Mucosa of descending colon (tissue), 3 donors: ENCODE measurements at regions of chr3 and their contacts with region 1.

Region 1: GRCh38 chr3:161274719-161275298 is 53.7 kb downstream of the NMD3 start:
- DNase-seq: peak in 1 of 3 donors; percentile 30
- ATAC-seq: peak; percentile 65
- H3K4me3 ChIP-seq: no peak overlapping the region
- H3K4me1 ChIP-seq: no peaks in the 10 kb centered on the region
- CTCF ChIP-seq: no peak

Region 2: DNA sequence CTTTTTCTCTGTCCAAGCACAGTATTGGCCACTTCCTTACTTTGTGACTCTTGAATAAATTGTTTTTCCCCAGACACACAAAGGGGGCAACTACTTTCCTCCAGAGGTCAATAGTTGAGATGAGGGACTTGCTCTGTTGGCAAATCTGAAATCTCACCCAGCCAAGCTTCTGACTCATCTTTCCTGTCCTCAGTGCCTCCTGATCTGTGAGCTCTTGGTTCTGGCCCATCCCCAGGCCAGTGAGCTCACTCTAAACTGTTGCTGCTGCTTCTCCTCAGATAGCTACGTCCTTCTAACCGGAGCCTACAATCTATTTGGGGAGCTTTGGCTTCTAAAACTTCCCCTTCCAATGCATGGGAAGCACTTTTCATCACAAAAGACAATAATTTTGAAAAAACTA is 103.7 kb before region 1 on chr3:
- intact Hi-C with region 1: no loop called
- DNase-seq: peak in 1 of 3 donors; percentile 17
- ATAC-seq: no peak
- H3K4me3 ChIP-seq: no peak overlapping the region
- H3K4me1 ChIP-seq: no peaks in the 10 kb centered on the region
- CTCF ChIP-seq: no peak

Region 3: GRCh38 chr3:161423911-161424522 is 149.2 kb after region 1 on chr3:
- intact Hi-C with region 1: loop called (anchors 5 to 10 kb)
- DNase-seq: no peak
- ATAC-seq: peak; percentile 55
- H3K4me3 ChIP-seq: no peak overlapping the region
- H3K4me1 ChIP-seq: no peaks in the 10 kb centered on the region
- CTCF ChIP-seq: peak; percentile 44

Region 4: GRCh38 chr3:161510510-161511260 is 235.9 kb after region 1 on chr3:
- intact Hi-C with region 1: no loop called
- DNase-seq: no peak
- ATAC-seq: no peak
- H3K4me3 ChIP-seq: no peak overlapping the region
- H3K4me1 ChIP-seq: no peaks in the 10 kb centered on the region
- CTCF ChIP-seq: no peak